Head of caudate nucleus (tissue), 42 donors: ENCODE measurements at regions of chr3 and their contacts with region 1.

Region 1: DNA sequence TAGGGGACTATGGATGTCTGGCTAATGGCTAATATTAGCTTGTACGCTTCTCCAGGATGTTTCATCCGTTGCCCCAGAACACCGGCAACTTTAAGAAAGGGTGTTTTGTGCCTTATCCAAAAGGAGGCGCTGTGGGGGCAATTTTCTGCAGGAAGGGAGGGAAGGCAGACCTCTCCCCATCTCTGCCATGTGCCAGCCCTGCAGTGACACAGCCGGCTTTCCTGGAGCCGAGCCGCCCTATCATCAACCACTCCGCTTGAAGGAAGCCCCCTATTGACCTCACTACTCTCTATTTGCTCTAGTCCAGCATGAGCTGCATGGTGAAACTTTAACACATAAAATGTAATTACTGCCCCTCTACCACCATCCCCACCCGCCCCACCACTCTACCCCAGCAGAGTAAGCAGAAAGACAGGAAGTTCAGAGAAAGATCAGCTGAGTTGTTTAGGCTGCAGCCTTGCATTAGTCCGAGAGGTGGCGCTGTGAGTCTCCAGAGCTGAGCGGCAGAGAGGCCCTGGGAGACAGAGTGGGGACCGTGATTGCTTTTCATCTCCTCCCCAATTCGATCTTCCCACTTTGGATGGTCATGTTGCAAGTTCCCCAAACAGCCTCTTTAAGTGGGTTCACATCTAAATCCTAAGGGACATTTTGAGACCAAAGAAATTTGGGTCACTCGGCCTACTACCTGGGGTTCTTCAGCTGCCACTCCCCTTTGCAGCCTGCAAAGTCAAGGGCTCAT is 24.5 kb upstream of the RAD18 start:
- DNase-seq: peak; percentile 50 to 90 (median 76)

Region 2: GRCh38 chr3:9067352-9067975 is 79.7 kb after region 1 on chr3:
- intact Hi-C with region 1: loop called (anchors 2 kb)
- DNase-seq: peak in 38 of 42 donors; percentile 19 to 85 (median 56)

Region 3: GRCh38 chr3:9130345-9131305 is 142.8 kb after region 1 on chr3:
- intact Hi-C with region 1: no loop called
- DNase-seq: peak in 24 of 42 donors; percentile 23 to 66 (median 46)

Region 4: DNA sequence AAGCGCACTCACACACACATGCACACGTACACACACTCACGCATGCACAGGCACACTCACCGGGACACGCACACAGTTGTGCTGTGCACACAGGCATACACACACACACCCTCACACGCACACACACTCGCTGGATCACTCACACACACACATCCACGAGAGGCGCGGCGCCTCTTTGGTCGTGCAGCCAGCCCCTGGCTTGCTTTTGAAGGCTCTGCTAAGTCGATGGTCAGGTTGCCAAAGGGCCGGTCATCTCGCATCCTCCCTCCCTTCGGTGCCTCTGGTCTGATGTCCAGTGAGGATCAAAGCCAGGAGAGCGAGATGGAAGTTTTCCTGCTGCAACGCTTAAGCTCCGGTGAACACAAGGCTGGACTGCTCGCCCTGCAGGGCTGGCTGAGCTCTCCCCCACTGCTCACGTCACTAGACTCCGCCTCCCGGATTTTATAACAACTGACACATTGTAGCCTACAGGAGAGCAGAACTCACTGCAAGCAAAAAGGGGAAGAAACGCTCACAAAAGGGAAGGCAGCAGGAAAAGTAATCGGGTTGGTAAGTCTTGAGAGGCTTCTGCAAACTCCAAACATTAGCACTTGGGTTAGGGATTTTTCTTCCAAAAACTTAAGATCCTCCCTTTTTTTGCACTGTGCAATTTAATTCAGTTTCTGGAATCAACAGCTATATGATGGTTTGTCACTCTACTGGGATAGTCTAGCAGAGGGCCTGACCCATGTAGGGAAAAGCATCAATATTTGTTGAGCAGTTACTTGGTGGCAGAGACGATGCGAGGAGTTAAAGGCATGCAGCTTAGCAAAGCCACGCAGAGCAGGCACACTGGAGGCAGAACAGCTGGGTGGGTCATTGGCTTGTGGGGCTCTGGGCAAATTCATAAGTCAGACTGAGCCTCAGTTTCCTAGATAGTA is 261.7 kb after region 1 on chr3 and contains the start of gene SRGAP3:
- intact Hi-C with region 1: loop called (anchors 5 kb)
- DNase-seq: peak; percentile 79 to 97 (median 92)

Region 5: DNA sequence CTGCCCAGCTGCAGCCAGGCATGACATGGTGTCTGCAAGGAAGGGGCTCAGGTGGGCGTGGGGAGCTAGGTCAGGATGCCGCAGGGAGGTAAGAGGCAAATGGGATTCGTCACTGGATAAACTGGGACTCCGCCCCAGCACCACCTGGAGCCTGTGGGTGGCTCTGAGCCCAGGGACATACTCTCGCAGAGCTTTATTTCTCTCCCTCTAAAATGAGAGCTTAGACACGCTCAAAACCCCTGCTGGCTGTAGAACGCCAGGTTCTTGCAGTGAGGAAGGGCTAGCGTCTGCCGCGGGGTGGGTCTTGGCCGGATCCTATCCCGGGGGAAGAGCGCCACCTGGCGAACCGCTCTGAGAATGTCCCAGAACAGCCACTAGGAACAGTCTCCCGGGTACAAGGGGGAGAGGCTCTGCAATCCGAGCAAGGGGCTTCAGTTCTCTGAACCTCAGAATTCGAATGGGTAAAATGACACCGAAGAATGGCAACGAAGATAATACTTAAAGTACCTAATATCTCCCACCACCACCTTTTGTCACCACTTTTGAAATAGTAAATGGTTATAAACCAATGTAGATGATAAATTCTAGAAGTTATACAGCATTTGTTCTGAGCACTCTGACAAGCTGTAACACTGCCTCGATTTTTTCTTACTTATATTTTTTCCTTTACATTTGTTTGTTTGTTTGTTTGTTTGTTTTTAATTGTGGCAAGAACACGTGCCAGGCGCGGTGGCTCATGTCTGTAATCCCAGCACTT is 314.8 kb after region 1 on chr3:
- intact Hi-C with region 1: loop called (anchors 5 kb)
- DNase-seq: peak; percentile 66 to 93 (median 84)